Right cardiac atrium (tissue), 5 donors: ENCODE measurements at regions of chr16 and their contacts with region 1.

Region 1: DNA sequence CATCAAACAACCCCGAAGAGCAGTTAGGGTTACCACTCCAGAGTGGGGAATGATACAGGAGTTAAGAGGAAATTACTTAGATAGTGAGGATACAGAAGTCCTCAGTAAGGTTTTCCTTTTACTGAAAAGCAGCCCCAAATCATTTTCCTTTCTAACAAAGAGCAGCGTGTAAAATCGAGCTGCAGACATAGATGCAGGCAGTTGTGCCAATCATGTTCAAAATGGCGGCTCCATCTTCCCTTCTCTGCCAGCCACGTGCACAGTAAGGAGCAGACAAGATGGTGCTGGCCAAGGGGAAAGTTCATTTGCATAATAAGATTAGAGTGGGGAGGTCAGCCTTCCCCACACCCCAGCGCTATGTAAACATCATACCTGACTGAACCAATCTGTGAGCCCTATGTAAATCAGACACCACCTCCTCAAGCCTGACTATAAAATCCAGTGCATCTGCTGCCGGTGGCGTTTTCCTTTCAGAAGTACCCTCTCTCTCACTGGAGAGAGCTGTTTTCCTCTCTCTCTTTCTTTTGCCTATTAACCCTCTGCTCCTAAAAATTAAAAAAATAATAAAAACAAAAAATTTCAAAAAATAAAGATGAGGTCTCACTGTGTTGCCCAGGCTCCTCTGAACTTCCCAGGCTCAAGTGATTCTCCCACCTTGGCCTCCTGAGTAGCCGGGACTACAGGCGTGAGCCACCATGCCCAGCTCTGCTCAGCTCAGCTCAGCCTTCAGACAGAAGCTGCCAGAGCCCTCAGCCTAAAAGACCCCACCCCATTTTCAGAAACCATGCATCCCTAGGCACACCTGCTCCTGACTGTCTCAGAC is 2.6 kb upstream of the SRL start:
- DNase-seq: peak in 2 of 3 donors; percentile 32
- ATAC-seq: peak in 1 of 2 donors; percentile 11
- H3K4me3 ChIP-seq: no peak overlapping the region
- H3K27ac ChIP-seq: no peak overlapping the region
- H3K4me1 ChIP-seq: peaks cover 3% of the 10 kb centered on the region
- H3K27me3 ChIP-seq: no peaks in the 10 kb centered on the region

Region 2: GRCh38 chr16:4208341-4208751 is 36.1 kb before region 1 on chr16:
- intact Hi-C with region 1: loop called in 1 of 4 experiments (anchors 5 kb)
- DNase-seq: peak in 2 of 3 donors; percentile 62 to 77
- ATAC-seq: no peak
- H3K4me3 ChIP-seq: no peak overlapping the region
- H3K27ac ChIP-seq: peak overlapping the region; percentile 90
- H3K4me1 ChIP-seq: peaks cover 5% of the 10 kb centered on the region
- H3K27me3 ChIP-seq: no peaks in the 10 kb centered on the region